Activated CD4-positive, alpha-beta T cell treated with anti-CD3 and anti-CD28 coated beads for 36 hours (primary cell): ENCODE measurements at regions of chr6 and their contacts with region 1.

Region 1: GRCh38 chr6:136927292-136927691 is 5.2 kb downstream of the SLC35D3 start:
- DNase-seq: peak; percentile 50
- ATAC-seq: peak; percentile 63
- H3K4me3 Mint-ChIP-seq: no peak overlapping the region
- H3K27ac Mint-ChIP-seq: no peak overlapping the region
- H3K4me1 Mint-ChIP-seq: peaks cover 9% of the 10 kb centered on the region
- H3K27me3 Mint-ChIP-seq: peaks cover 33% of the 10 kb centered on the region

Region 2: DNA sequence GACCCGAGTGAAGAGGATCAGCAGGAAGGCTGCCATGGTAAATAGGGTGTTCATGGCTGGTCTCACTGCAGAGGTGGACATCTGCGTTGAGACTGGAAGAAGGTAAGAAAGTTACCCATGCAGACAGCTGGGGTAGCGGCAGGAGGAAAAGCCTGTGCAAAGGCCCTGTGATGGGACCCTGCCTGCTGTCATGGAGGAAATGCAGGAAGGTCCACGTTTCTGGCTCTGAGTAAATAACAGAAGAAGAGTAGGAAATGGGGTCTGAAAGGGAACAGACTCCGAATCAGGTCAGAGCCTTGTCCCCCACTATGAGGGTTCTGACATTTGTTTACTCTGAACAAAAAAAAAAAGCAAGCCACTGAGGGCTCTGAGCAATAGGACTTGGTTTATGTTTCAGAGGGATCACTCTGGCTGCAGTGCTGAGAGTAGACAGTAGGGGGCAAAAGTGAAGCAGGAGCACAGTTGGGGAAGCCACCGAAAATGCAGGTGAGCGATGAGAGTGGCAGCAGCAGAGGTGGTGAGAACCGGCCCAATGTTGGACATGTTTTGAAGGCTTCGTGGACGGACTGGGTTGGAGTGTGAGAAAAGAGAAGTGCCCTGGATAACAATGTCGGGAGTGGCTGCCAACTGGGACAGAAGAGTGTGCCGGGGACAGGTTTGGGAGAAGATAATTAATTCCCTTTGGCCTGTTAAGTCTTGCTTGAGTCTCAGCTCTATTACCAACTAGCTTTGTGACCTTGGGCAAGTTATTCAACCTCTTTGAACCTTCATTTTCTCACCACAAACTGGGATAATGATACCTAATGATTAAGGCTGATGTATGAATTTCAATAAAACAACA is 319.1 kb before region 1 on chr6:
- CTCF ChIA-PET with region 1: no interaction called
- POLR2A ChIA-PET with region 1: no interaction called
- intact Hi-C with region 1: loop called in 1 of 2 experiments (anchors 1 kb)
- DNase-seq: peak; percentile 91
- ATAC-seq: peak; percentile 94
- H3K4me3 Mint-ChIP-seq: no peak overlapping the region
- H3K27ac Mint-ChIP-seq: no peak overlapping the region
- H3K4me1 Mint-ChIP-seq: peaks cover 13% of the 10 kb centered on the region
- H3K27me3 Mint-ChIP-seq: no peaks in the 10 kb centered on the region

Region 3: GRCh38 chr6:136846046-136846445 is 81.2 kb before region 1 on chr6:
- CTCF ChIA-PET with region 1: no interaction called
- POLR2A ChIA-PET with region 1: interaction called, 3 read pairs
- intact Hi-C with region 1: loop called (anchors 5 to 10 kb)
- DNase-seq: peak; percentile 52
- ATAC-seq: peak; percentile 39
- H3K4me3 Mint-ChIP-seq: no peak overlapping the region
- H3K27ac Mint-ChIP-seq: no peak overlapping the region
- H3K4me1 Mint-ChIP-seq: no peaks in the 10 kb centered on the region
- H3K27me3 Mint-ChIP-seq: no peaks in the 10 kb centered on the region